ENCODE measurements at regions of chr15 and their contacts with region 1.

Region 1: DNA sequence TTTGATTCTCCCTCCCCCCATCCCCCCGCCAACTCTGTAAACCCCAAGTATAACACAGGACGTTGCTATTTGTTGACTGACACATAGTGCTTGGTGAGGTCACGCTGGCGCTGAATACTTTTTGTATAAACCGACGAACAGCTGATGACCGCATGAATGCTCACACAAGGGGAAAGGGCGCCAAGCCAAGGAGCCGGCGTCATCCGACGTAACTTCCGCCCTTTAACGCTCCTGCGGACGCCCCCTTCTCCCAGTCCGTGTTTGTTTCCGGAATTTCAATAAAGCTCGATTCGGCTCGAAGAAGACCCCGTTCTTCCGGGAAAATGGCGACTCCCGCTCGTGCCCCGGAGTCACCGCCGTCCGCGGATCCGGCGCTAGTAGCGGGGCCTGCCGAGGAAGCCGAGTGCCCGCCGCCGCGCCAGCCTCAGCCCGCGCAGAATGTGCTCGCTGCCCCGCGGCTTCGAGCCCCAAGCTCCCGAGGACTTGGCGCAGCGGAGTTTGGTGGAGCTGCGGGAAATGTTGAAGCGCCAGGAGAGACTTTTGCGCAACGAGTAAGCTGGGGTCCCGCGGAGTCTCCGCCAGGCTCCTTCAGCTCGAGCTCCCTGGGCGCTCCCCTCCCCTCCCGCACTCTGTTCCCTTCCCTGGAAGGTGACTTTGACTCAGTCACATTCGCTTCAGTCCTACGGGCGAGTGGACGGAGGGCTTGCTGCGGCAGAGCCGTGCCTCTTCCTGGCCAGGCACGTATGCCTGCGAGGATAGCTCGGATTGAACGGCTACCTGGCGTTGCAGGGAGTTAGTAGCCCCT is at the start of gene POLR2M:
- DNase-seq: peak; percentile 78 to 98 (median 86)
- ATAC-seq: peak; percentile 88
- H3K4me3 ChIP-seq: peak within 1 kb of the TSS; percentile 90
- H3K4me3 Mint-ChIP-seq: peak within 1 kb of the TSS; percentile 85
- H3K27ac ChIP-seq: peak within 1 kb of the TSS; percentile 87 to 95
- H3K27ac Mint-ChIP-seq: peak within 1 kb of the TSS; percentile 99
- H3K4me1 ChIP-seq: peaks cover 35% of the 10 kb centered on the region
- H3K4me1 Mint-ChIP-seq: peaks cover 93% of the 10 kb centered on the region
- H3K27me3 ChIP-seq: no peaks in the 10 kb centered on the region
- H3K27me3 Mint-ChIP-seq: no peaks in the 10 kb centered on the region
- CTCF ChIP-seq: no peak
- total RNA-seq, gene POLR2M: 88.5 to 109 TPM

Region 2: GRCh38 chr15:56732921-56733797 is 973.4 kb before region 1 on chr15 and contains the start of gene ZNF280D:
- CTCF ChIA-PET with region 1: no interaction called
- POLR2A ChIA-PET with region 1: interaction called, 6 read pairs
- intact Hi-C with region 1: loop called in 1 of 2 experiments (anchors 10 kb)
- DNase-seq: peak; percentile 65 to 91 (median 74)
- ATAC-seq: peak; percentile 87
- H3K4me3 ChIP-seq: peak within 1 kb of the TSS; percentile 79
- H3K4me3 Mint-ChIP-seq: peak within 1 kb of the TSS; percentile 89
- H3K27ac ChIP-seq: peak within 1 kb of the TSS in 1 of 2 donors; percentile 48
- H3K27ac Mint-ChIP-seq: peak within 1 kb of the TSS; percentile 92
- H3K4me1 ChIP-seq: peaks cover 27% of the 10 kb centered on the region
- H3K4me1 Mint-ChIP-seq: peaks cover 42% of the 10 kb centered on the region
- H3K27me3 ChIP-seq: no peaks in the 10 kb centered on the region
- H3K27me3 Mint-ChIP-seq: no peaks in the 10 kb centered on the region
- CTCF ChIP-seq: no peak
- total RNA-seq, gene ZNF280D: 27.2 to 30.3 TPM

Region 3: GRCh38 chr15:57591646-57592367 is 114.8 kb before region 1 on chr15 and contains the start of gene MYZAP:
- CTCF ChIA-PET with region 1: no interaction called
- POLR2A ChIA-PET with region 1: interaction called, 14 read pairs
- intact Hi-C with region 1: loop called in 1 of 2 experiments (anchors 10 kb)
- DNase-seq: peak; percentile 8 to 75 (median 44)
- ATAC-seq: peak; percentile 73
- H3K4me3 ChIP-seq: peak within 1 kb of the TSS; percentile 40
- H3K4me3 Mint-ChIP-seq: peak within 1 kb of the TSS; percentile 80
- H3K27ac ChIP-seq: no peak within 1 kb of the TSS
- H3K27ac Mint-ChIP-seq: peak within 1 kb of the TSS; percentile 32
- H3K4me1 ChIP-seq: peaks cover 21% of the 10 kb centered on the region
- H3K4me1 Mint-ChIP-seq: peaks cover 42% of the 10 kb centered on the region
- H3K27me3 ChIP-seq: peaks cover 8 to 10% of the 10 kb centered on the region in 2 experiments
- H3K27me3 Mint-ChIP-seq: peaks cover 18% of the 10 kb centered on the region
- CTCF ChIP-seq: no peak
- total RNA-seq, gene MYZAP: 0.66 to 1.1 TPM

Region 4: GRCh38 chr15:57806003-57806402 is 99.4 kb after region 1 on chr15:
- CTCF ChIA-PET with region 1: no interaction called
- POLR2A ChIA-PET with region 1: no interaction called
- intact Hi-C with region 1: no loop called
- DNase-seq: no peak
- ATAC-seq: no peak
- H3K4me3 ChIP-seq: no peak overlapping the region
- H3K4me3 Mint-ChIP-seq: no peak overlapping the region
- H3K27ac ChIP-seq: no peak overlapping the region
- H3K27ac Mint-ChIP-seq: no peak overlapping the region
- H3K4me1 ChIP-seq: no peaks in the 10 kb centered on the region
- H3K4me1 Mint-ChIP-seq: no peaks in the 10 kb centered on the region
- H3K27me3 ChIP-seq: no peaks in the 10 kb centered on the region
- H3K27me3 Mint-ChIP-seq: no peaks in the 10 kb centered on the region
- CTCF ChIP-seq: no peak

Region 5: DNA sequence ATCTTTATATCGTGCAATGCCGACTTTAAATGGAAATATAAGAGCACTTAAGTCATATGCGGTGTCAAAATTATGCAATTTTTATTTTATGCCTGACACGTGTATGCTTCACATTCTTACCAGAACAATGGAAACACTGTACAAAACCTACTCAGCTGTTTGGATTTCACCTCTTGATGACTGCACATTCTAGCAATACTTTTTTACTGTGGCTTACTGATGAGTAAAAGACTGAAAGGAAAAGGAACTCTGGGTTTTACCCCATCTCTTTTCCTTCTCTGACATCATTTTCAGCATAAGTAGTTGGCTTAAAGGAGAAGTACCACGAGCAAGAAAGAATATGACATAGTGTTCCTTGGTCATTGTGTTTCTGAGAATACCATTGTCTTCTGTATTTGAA is 142.7 kb after region 1 on chr15:
- CTCF ChIA-PET with region 1: no interaction called
- POLR2A ChIA-PET with region 1: no interaction called
- intact Hi-C with region 1: no loop called
- DNase-seq: no peak
- ATAC-seq: no peak
- H3K4me3 ChIP-seq: no peak overlapping the region
- H3K4me3 Mint-ChIP-seq: no peak overlapping the region
- H3K27ac ChIP-seq: no peak overlapping the region
- H3K27ac Mint-ChIP-seq: no peak overlapping the region
- H3K4me1 ChIP-seq: no peaks in the 10 kb centered on the region
- H3K4me1 Mint-ChIP-seq: no peaks in the 10 kb centered on the region
- H3K27me3 ChIP-seq: peaks cover 0 to 9% of the 10 kb centered on the region in 2 experiments
- H3K27me3 Mint-ChIP-seq: peaks cover 28% of the 10 kb centered on the region
- CTCF ChIP-seq: no peak

Measured in CD4-positive, alpha-beta T cell (primary cell).